K562 (cell line): ENCODE measurements at regions of chr17 and their contacts with region 1.

Region 1: GRCh38 chr17:1716076-1716995 is 6.2 kb upstream of the TLCD2 start:
- DNase-seq: peak; percentile 89 to 99 (median 94)
- ATAC-seq: peak; percentile 78
- H3K4me3 ChIP-seq: peak overlapping the region; percentile 85
- H3K27ac ChIP-seq: peak overlapping the region; percentile 99
- H3K4me1 ChIP-seq: peaks cover 39 to 50% of the 10 kb centered on the region in 2 experiments
- H3K27me3 ChIP-seq: no peaks in the 10 kb centered on the region
- CTCF ChIP-seq: peak in 2 of 3 experiments; percentile 6 to 10; a peak in 1 of 6 replicates
- EP300 ChIP-seq: peak; percentile 22; the same call in 1 of the 2 replicates
- POLR2A ChIP-seq: peak; percentile 86
- RAD21 ChIP-seq: peak in 1 of 2 experiments; percentile 14; a peak in 1 of 4 replicates

Region 2: GRCh38 chr17:1590031-1590748 is 126.1 kb before region 1 on chr17:
- CTCF ChIA-PET with region 1: no interaction called
- POLR2A ChIA-PET with region 1: no interaction called
- in situ Hi-C with region 1: no loop called
- intact Hi-C with region 1: no loop called
- DNase-seq: peak; percentile 49 to 77 (median 64)
- ATAC-seq: peak; percentile 93
- H3K4me3 ChIP-seq: no peak overlapping the region
- H3K27ac ChIP-seq: 0 out of 3 replicates have a peak overlapping the region, but pooled peaks have one; percentile 17
- H3K4me1 ChIP-seq: peaks cover 12 to 41% of the 10 kb centered on the region in 2 experiments; a peak in 4 of 5 replicates
- H3K27me3 ChIP-seq: no peaks in the 10 kb centered on the region
- CTCF ChIP-seq: no peak
- EP300 ChIP-seq: peak; percentile 58; the same call in 1 of the 2 replicates
- POLR2A ChIP-seq: no peak
- RAD21 ChIP-seq: no peak

Region 3: DNA sequence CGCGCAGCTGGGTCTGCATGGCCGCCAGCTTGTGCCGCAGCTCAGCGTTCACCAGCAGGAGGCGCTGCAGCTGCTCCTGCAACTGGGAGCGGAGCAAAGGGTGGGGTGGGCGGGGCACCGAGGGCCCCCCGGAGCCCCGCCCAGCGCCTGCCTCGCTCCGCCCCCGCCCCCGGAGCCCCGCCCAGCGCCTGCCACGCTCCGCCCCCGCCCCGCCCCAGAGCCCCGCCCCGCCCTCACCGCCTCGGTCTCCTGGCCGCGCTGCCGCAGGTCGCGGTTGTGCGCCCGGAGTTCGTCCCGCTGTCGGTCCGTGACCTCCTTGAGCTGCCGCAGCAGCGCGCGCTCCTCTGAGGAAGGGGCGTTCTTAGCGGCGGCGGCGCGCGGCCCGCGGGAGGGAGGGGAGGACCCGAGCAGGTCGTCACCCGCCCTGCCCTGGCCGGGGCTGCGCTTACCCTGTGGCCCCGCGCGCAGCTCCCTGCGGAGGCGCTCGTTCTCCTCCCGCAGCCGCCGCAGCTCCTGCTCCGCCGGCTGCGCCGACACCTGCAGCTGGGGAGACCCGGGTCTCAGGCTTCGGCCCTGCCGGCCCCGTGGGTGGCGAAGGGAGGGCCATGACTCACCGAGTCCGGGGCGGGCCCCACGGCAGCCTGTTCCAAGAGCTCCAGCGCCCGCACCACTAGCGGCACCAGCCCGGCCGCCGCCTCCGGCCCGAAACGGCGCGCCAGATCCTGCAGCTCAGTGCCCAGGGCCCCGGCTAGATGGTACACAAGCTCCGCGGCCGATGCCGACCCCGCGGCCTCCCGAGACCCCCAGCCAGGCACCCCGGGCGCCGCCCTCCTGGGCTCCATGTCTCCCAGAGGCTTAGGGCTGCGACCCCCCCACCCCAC is 67.1 kb before region 1 on chr17:
- CTCF ChIA-PET with region 1: no interaction called
- POLR2A ChIA-PET with region 1: interaction called, 15 read pairs
- in situ Hi-C with region 1: no loop called
- intact Hi-C with region 1: loop called (anchors 2 kb)
- DNase-seq: peak; percentile 93 to 95 (median 94)
- ATAC-seq: peak; percentile 75
- H3K4me3 ChIP-seq: peak overlapping the region; percentile 70
- H3K27ac ChIP-seq: peak overlapping the region; percentile 99
- H3K4me1 ChIP-seq: peaks cover 21 to 59% of the 10 kb centered on the region in 2 experiments
- H3K27me3 ChIP-seq: no peaks in the 10 kb centered on the region
- CTCF ChIP-seq: peak; percentile 68 to 99 (median 97)
- EP300 ChIP-seq: no peak
- POLR2A ChIP-seq: peak; percentile 85
- RAD21 ChIP-seq: no peak

Region 4: DNA sequence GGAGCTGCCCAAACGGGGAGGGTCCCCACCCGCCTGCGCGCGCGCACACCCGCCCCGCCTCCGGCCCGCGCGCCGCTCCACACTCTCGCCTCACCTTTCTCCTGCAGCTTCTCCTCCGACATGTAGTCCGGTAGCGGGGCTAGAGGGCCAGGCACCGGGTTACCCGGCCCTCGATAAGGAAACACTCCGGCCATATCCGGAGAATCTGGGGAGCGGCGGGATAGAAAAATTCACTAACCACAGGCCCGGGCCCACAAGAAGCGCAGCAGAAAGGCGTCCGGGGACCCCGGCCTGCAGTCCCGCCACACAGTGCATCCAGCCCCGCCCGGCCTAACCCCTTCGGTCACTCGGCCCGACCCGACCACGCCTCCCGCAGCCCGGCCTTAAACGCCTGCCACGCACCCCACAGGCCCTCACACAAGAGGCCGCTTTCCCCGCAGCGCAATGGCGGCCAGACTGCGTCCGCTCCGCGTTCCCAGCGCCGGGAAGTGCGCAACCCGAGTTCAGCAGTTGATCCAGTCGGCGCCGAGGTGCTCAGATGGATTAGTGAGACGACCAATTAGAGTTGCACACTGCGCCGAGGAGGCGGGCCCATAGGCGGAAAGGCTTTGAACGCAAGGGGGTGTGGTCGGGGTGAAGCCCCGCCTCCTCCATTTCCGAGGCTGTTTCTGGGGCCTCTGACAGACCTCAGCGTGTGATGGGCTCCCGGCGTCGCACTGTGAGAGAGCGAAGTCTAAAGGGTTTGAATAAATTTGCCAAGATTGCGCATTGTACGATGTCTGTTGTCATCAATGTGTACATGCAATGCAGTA is 31.8 kb before region 1 on chr17 and contains the start of gene PRPF8:
- CTCF ChIA-PET with region 1: no interaction called
- POLR2A ChIA-PET with region 1: interaction called, 3 read pairs
- in situ Hi-C with region 1: no loop called
- intact Hi-C with region 1: loop called (anchors 5 kb)
- DNase-seq: peak; percentile 88 to 97 (median 93)
- ATAC-seq: peak; percentile 100
- H3K4me3 ChIP-seq: peak within 1 kb of the TSS; percentile 94
- H3K27ac ChIP-seq: peak within 1 kb of the TSS; percentile 84
- H3K4me1 ChIP-seq: peaks cover 6 to 11% of the 10 kb centered on the region in 2 experiments; a peak in 4 of 5 replicates
- H3K27me3 ChIP-seq: no peaks in the 10 kb centered on the region
- CTCF ChIP-seq: no peak
- EP300 ChIP-seq: no peak
- POLR2A ChIP-seq: peak; percentile 89
- RAD21 ChIP-seq: no peak
- polyA plus RNA-seq, gene PRPF8: 128 to 174 TPM

Region 5: DNA sequence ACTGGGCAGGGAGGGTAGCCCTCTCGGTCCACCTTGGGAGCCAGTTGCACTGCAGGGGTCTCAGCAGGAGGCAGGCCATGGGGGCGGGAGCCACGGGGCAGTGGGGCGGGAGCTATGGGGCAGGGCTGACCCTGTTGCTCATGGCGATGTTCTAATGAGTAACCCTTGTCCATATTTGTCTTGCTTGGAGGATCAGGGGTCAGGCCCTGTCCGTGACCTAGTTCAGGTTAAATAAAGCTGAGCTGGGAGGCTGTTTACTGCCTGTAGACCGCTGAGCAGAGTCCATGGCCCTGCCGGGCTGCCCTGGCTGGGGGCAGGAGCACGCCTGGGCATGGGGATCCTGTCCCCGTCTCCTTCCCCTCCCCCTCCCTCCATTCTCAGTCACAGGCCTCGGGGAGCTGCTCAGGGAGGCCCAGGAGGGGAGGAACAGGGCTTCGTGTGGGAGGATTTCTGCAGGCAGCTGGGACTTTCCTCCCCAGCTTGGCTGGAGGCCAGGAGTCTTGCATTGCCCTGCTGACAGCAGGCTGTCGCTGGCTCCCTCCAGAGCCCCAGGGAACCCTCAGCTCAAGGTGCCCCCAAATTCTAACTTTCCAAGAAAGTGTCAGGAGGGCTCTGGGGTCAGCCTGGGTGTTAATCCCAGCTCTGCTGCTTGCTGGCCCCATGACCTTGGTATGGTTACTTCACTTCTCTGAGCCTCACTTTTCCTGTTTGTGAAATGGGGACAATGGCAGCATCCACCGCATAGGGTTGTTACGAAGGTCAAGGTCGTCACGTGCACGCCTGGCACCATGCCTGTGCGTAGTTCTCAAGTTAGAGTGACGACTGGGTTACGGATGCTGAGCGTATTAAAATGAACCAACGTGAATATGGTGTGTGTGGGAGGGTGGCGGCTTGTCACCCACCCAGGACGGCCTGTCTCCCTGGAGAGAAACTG is 20.3 kb after region 1 on chr17:
- CTCF ChIA-PET with region 1: no interaction called
- POLR2A ChIA-PET with region 1: interaction called, 16 read pairs
- in situ Hi-C with region 1: no loop called
- intact Hi-C with region 1: no loop called
- DNase-seq: peak; percentile 78 to 89 (median 80)
- ATAC-seq: peak; percentile 94
- H3K4me3 ChIP-seq: no peak overlapping the region
- H3K27ac ChIP-seq: peak overlapping the region; percentile 53; the same call in 2 of the 3 replicates
- H3K4me1 ChIP-seq: peaks cover 7 to 50% of the 10 kb centered on the region in 2 experiments
- H3K27me3 ChIP-seq: peaks cover 0 to 3% of the 10 kb centered on the region in 2 experiments; a peak in 1 of 5 replicates
- CTCF ChIP-seq: no peak
- EP300 ChIP-seq: 0 out of 2 replicates have a peak, but pooled peaks have one; percentile 25
- POLR2A ChIP-seq: no peak
- RAD21 ChIP-seq: no peak

Region 6: GRCh38 chr17:1931759-1932579 is 215.6 kb after region 1 on chr17:
- CTCF ChIA-PET with region 1: no interaction called
- POLR2A ChIA-PET with region 1: no interaction called
- in situ Hi-C with region 1: no loop called
- intact Hi-C with region 1: no loop called
- DNase-seq: no peak
- ATAC-seq: no peak
- H3K4me3 ChIP-seq: no peak overlapping the region
- H3K27ac ChIP-seq: no peak overlapping the region
- H3K4me1 ChIP-seq: peaks cover 0 to 18% of the 10 kb centered on the region in 2 experiments; a peak in 2 of 5 replicates
- H3K27me3 ChIP-seq: peaks cover 21 to 68% of the 10 kb centered on the region in 2 experiments; a peak in 4 of 5 replicates
- CTCF ChIP-seq: peak in 1 of 3 experiments; percentile 43; a peak in 3 of 6 replicates
- EP300 ChIP-seq: no peak
- POLR2A ChIP-seq: no peak
- RAD21 ChIP-seq: no peak

Region 7: GRCh38 chr17:2029911-2030778 is 313.8 kb after region 1 on chr17 and contains the start of gene DPH1:
- CTCF ChIA-PET with region 1: no interaction called
- POLR2A ChIA-PET with region 1: no interaction called
- in situ Hi-C with region 1: loop called (anchors 10 kb)
- intact Hi-C with region 1: loop called (anchors 5 kb)
- DNase-seq: peak; percentile 86 to 92 (median 89)
- ATAC-seq: peak; percentile 97
- H3K4me3 ChIP-seq: peak within 1 kb of the TSS; percentile 85
- H3K27ac ChIP-seq: peak within 1 kb of the TSS; percentile 62
- H3K4me1 ChIP-seq: peaks cover 8 to 33% of the 10 kb centered on the region in 2 experiments; a peak in 4 of 5 replicates
- H3K27me3 ChIP-seq: peaks cover 0 to 6% of the 10 kb centered on the region in 2 experiments; a peak in 1 of 5 replicates
- CTCF ChIP-seq: no peak; a peak in 1 of 6 replicates
- EP300 ChIP-seq: no peak
- POLR2A ChIP-seq: peak; percentile 75
- RAD21 ChIP-seq: no peak
- polyA plus RNA-seq, gene DPH1: 0.42 to 0.94 TPM